Psoas muscle (tissue), 8 donors: ENCODE measurements at regions of chr12 and their contacts with region 1.

Region 1: DNA sequence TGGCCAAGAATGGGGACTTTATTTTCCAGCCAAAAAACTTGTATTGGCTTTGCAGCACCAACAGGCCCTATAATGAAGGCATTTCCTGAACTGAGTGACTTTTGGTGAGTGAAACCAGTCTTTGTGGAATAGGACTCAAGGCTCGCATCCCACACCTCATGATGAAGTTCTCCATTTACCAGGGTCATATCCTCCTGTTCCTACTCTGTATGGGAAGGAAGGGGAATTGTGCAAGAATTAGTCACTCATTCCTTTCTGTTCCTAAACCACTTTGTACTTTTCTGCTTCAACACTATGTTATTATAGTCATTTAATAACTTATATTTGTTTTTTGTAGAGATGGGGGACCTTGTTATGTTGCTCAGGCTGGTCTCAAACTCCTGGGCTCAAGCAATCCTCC is 2.3 kb upstream of the SPATS2 start:
- DNase-seq: no peak
- ATAC-seq: no peak
- H3K4me3 ChIP-seq: no peak overlapping the region
- H3K27ac ChIP-seq: no peak overlapping the region
- H3K4me1 ChIP-seq: peaks cover 21% of the 10 kb centered on the region
- H3K27me3 ChIP-seq: no peaks in the 10 kb centered on the region
- CTCF ChIP-seq: no peak

Region 2: DNA sequence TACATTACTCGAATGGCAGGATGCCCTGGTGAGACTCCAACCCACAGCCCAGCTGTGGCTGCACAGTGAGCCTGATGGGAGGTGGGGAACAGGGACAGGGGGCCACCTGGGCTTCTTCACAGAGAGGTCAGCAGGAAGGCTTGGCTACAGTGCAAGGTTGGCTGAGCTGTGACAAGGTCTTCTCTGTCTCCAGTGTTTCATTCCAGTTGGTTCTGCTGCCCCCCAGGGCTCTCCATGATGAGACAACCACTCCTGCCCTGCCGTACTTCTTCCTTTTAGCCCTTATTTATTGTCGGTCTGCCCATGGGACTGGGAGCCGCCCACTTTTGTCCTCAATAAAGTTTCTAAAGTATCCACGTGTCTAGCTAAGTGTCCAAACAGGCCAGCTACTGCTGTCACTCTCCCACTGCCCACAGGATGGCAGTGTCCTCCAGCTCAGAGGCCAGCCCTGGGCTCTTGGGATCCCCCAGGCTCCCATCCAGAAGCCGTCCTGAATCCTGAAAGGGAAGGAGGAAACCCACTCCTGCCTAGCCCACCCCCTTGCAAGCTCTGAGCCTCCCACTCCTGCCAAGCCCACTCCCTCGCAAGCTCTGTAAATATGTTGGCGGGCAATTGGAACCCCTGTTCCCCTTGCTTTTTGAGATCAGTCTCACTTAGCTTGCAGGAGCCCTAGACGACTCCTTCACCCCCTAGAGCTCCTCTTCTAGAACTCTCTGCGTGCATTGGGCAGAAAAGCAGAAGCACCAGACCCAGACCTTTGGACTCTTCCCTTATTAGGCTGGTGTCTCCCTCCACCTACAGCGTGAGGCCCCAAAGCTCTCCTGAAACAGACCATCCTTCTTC is 33.4 kb before region 1 on chr12:
- intact Hi-C with region 1: no loop called
- DNase-seq: peak; percentile 70 to 82
- ATAC-seq: peak; percentile 89 to 96 (median 92)
- H3K4me3 ChIP-seq: no peak overlapping the region
- H3K27ac ChIP-seq: no peak overlapping the region
- H3K4me1 ChIP-seq: no peaks in the 10 kb centered on the region
- H3K27me3 ChIP-seq: peaks cover 0 to 35% (median 14%) of the 10 kb centered on the region in 3 donors
- CTCF ChIP-seq: peak; percentile 78

Region 3: GRCh38 chr12:49567611-49568441 is 202.8 kb after region 1 on chr12 and contains the start of gene MCRS1:
- intact Hi-C with region 1: loop called in 1 of 2 experiments (anchors 1 kb)
- DNase-seq: peak; percentile 86 to 91
- ATAC-seq: peak; percentile 78 to 91 (median 82)
- H3K4me3 ChIP-seq: peak within 1 kb of the TSS; percentile 99
- H3K27ac ChIP-seq: peak within 1 kb of the TSS; percentile 97
- H3K4me1 ChIP-seq: peaks cover 42% of the 10 kb centered on the region
- H3K27me3 ChIP-seq: no peaks in the 10 kb centered on the region
- CTCF ChIP-seq: no peak
- total RNA-seq, gene MCRS1: 39.1 to 82.3 (median 55.1) TPM